Sigmoid colon (tissue), 7 donors: ENCODE measurements at regions of chr19 and their contacts with region 1.

Region 1: GRCh38 chr19:56567274-56568120 is at the start of gene ZNF470:
- DNase-seq: peak; percentile 98
- H3K4me3 ChIP-seq: peak within 1 kb of the TSS; percentile 82 to 93 (median 86)
- H3K27ac ChIP-seq: peak within 1 kb of the TSS; percentile 85 to 91 (median 86)
- H3K4me1 ChIP-seq: peaks cover 0 to 16% (median 4%) of the 10 kb centered on the region in 4 donors
- H3K27me3 ChIP-seq: no peaks in the 10 kb centered on the region
- CTCF ChIP-seq: no peak
- EP300 ChIP-seq: no peak
- POLR2A ChIP-seq: peak; percentile 37 to 51
- total RNA-seq, gene ZNF470: 4.8 to 5.8 (median 5.3) TPM

Region 2: DNA sequence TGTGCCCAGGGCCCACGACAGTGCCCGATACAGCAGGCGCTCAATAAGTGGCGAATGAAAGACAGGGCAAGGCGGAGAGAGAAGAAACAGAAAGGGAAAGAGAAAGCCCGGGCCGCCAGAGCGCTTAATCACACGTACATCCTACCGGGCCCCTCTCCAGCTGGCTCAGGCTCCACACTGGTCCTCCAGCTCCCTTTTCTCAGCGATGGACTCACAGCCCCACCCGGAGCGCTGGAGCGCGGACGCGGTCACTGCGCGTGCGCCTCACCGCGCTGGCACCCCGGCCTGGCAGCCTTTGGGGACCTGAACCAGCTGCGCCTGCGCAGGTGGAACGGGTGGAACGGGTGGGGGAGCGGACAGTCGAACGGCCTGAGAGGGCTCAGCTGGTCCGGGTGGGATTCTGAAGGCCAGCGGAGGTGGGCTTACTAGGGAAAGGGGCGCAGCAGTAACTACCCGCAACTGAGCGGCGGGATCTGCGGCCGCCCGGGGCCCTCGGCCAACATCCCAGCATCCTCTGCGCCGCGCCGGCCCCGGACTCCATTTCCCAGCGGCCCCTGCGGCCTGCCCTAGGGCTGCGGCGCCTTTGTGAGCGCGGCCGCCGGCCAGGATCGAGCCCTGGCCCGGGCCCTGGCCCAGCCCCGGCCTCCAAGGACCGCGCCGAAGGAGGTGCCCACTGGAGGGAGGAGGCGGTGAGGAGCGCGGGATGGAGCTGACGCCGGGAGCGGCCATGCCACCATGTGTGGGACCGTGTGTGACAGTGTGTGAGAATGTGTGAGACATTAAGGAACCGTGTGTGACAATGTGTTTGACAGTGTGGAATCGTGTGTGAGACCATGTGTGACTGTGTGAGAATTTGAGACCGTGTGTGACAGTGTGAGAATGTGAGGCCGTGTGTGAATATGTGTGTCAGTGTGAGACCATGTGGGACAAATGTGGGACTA is 163.5 kb before region 1 on chr19 and contains the start of gene ZNF583:
- intact Hi-C with region 1: loop called (anchors 5 kb)
- DNase-seq: peak; percentile 99
- H3K4me3 ChIP-seq: peak within 1 kb of the TSS; percentile 61 to 79 (median 73)
- H3K27ac ChIP-seq: peak within 1 kb of the TSS; percentile 89 to 96 (median 94)
- H3K4me1 ChIP-seq: peaks cover 0 to 17% (median 15%) of the 10 kb centered on the region in 4 donors
- H3K27me3 ChIP-seq: no peaks in the 10 kb centered on the region
- CTCF ChIP-seq: no peak
- EP300 ChIP-seq: no peak
- POLR2A ChIP-seq: no peak
- total RNA-seq, gene ZNF583: 8.7 to 12.7 (median 10.4) TPM

Region 3: GRCh38 chr19:56538254-56538760 is 29.2 kb before region 1 on chr19:
- intact Hi-C with region 1: loop called (anchors 1 kb)
- DNase-seq: peak; percentile 96
- H3K4me3 ChIP-seq: peak overlapping the region; percentile 67 to 85 (median 82)
- H3K27ac ChIP-seq: peak overlapping the region; percentile 88 to 92 (median 90)
- H3K4me1 ChIP-seq: peaks cover 0 to 22% (median 17%) of the 10 kb centered on the region in 4 donors
- H3K27me3 ChIP-seq: no peaks in the 10 kb centered on the region
- CTCF ChIP-seq: peak in 1 of 4 experiments; percentile 14
- EP300 ChIP-seq: no peak
- POLR2A ChIP-seq: no peak

Region 4: GRCh38 chr19:56594783-56595547 is 27.5 kb after region 1 on chr19 and contains the start of gene ZNF71:
- intact Hi-C with region 1: loop called (anchors 2 kb)
- DNase-seq: peak; percentile 93
- H3K4me3 ChIP-seq: peak within 1 kb of the TSS; percentile 80 to 100 (median 90)
- H3K27ac ChIP-seq: peak within 1 kb of the TSS; percentile 71 to 80 (median 79)
- H3K4me1 ChIP-seq: peaks cover 0 to 19% (median 8%) of the 10 kb centered on the region in 4 donors
- H3K27me3 ChIP-seq: no peaks in the 10 kb centered on the region
- CTCF ChIP-seq: no peak
- EP300 ChIP-seq: no peak
- POLR2A ChIP-seq: no peak
- total RNA-seq, gene ZNF71: 10.4 to 18.0 (median 11.1) TPM